Activated CD8-positive, alpha-beta T cell treated with anti-CD3 and anti-CD28 coated beads, Interleukin-2, amount 10 ng/mL, durations not matched to agents 7 days and 5 days (primary cell): ENCODE measurements at regions of chr1 and their contacts with region 1.

Region 1: DNA sequence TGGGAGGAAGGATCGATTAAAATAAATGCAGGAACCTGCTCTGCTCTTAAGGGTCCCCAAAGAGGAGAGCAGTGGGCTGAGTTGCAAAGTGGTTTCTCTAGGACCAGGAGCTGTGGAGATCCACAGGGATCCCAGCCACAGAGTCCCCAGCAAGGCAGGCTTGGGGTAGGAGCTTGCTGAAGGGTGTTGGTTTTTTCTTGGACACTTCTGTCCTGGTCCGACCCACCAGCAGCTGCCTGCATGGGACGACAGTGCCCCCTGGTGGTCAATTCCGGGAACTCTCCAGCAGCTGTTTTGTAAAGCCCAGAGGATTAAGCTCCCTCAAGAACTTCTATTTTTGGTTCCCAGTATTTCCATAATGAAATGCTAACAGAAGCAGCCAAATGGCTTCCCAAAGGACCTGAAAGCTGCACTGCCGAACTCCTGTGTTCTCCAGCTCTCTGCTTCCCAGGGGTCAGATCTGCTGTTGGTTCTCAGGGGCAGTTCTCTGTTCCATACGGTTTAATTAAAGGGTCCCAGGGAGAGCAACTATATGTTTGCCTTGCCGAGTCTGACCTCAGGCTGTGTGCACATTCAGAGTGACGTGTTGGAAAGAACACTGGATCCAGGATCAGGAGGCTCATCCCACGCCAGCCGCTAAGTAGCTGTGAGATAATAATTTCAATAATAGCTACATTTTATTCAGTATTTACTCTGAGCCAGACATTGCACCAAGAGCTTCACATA is 23.2 kb downstream of the NENF start:
- DNase-seq: peak; percentile 89
- ATAC-seq: peak; percentile 78
- H3K4me3 Mint-ChIP-seq: no peak overlapping the region
- H3K27ac Mint-ChIP-seq: no peak overlapping the region
- H3K4me1 Mint-ChIP-seq: peaks cover 15% of the 10 kb centered on the region
- H3K27me3 Mint-ChIP-seq: no peaks in the 10 kb centered on the region

Region 2: DNA sequence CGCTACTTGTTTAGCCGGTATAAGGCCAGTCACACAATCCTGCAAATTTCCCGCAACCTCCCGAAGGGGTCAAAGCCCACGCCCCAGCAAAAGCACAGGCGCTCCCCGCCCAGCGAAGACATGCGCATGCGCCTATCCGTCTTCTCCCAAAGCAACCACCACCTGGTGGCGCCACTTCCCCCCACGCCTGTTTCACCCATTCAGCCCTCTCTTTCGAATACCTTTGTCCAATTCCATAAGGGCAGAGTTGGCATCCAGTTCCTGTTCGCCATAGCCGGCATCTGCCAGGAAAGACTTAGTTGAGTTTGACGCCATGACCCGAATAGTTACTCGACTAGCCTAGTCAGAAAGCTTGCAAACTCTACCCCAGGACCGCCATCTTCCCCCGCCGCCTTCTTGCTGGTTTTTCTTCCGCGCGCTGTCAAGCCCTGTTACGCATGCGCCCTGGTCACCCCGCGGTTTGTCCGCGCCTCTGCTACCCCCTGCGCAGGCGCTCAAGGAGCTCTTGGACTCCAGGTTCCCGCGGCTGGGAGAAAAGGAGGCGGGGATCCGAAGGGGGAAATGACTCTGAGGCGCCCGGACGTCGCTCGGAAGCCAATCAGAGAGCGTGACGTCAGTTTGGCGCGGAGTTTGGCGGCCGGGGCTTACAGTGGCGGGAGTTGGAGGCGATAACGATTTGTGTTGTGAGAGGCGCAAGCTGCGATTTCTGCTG is 420.7 kb before region 1 on chr1 and contains the starts of genes DTL and INTS7:
- CTCF ChIA-PET with region 1: interaction called, 58 read pairs
- POLR2A ChIA-PET with region 1: interaction called, 3 read pairs
- DNase-seq: peak; percentile 100
- ATAC-seq: peak; percentile 87
- H3K4me3 Mint-ChIP-seq: peak within 1 kb of the TSS; percentile 98
- H3K27ac Mint-ChIP-seq: peak within 1 kb of the TSS; percentile 99
- H3K4me1 Mint-ChIP-seq: peaks cover 56% of the 10 kb centered on the region
- H3K27me3 Mint-ChIP-seq: no peaks in the 10 kb centered on the region
- total RNA-seq, gene DTL: 74.1 to 77.5 TPM
- total RNA-seq, gene INTS7: 31.8 to 32.1 TPM

Region 3: DNA sequence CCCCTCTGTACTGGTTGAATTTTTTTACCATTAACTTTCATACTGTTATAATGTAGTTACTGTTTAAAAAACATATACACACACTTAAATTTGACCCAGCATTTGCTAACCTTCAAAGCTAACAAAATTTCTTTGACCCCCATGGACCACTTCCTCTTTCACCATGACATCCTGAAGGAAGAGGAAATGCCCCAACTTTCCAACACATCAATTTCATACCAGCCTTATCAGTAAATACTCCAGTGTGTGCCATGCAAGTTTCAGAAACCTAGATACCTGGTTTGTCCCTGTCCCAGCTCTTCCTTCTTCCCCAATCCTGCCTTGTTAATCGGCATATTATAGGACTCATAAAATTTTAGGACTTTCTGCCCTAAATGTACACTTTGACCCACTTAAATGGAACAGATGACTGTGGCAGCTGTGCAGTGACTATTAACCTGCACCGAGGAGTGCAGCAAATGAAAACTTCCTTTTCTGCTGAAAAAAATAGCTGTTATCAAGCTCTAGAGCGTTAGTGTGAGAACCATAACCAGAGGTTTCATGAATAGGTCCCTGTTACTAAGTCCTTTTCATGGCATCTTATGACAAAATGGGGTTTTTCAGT is 366.3 kb before region 1 on chr1:
- CTCF ChIA-PET with region 1: interaction called, 15 read pairs
- POLR2A ChIA-PET with region 1: no interaction called
- DNase-seq: no peak
- ATAC-seq: no peak
- H3K4me3 Mint-ChIP-seq: no peak overlapping the region
- H3K27ac Mint-ChIP-seq: peak overlapping the region; percentile 12
- H3K4me1 Mint-ChIP-seq: peaks cover 30% of the 10 kb centered on the region
- H3K27me3 Mint-ChIP-seq: no peaks in the 10 kb centered on the region

Region 4: DNA sequence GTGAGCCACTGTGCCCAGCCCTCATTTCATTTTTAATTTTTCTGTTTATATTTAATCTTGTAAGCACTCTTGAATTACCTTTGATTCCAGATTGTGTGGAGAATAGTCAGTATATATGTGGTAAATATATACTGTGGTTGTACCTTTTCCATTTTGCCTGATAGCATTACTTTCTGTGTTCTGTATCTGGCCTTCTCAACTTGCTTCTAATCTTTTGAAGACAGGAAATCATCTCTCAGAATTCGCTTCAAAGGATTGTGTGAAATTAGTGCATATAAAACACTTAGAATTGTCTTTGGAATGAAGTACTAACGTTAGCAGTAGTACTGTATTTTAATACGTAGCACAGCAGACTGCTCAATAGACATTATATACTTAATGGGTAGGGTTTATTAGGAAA is 132.9 kb before region 1 on chr1:
- CTCF ChIA-PET with region 1: no interaction called
- POLR2A ChIA-PET with region 1: no interaction called
- DNase-seq: no peak
- ATAC-seq: no peak
- H3K4me3 Mint-ChIP-seq: no peak overlapping the region
- H3K27ac Mint-ChIP-seq: no peak overlapping the region
- H3K4me1 Mint-ChIP-seq: peaks cover 5% of the 10 kb centered on the region
- H3K27me3 Mint-ChIP-seq: no peaks in the 10 kb centered on the region

Region 5: GRCh38 chr1:212355230-212355969 is 100.6 kb before region 1 on chr1:
- CTCF ChIA-PET with region 1: interaction called, 14 read pairs
- POLR2A ChIA-PET with region 1: no interaction called
- DNase-seq: no peak
- ATAC-seq: no peak
- H3K4me3 Mint-ChIP-seq: no peak overlapping the region
- H3K27ac Mint-ChIP-seq: no peak overlapping the region
- H3K4me1 Mint-ChIP-seq: peaks cover 14% of the 10 kb centered on the region
- H3K27me3 Mint-ChIP-seq: no peaks in the 10 kb centered on the region

Region 6: DNA sequence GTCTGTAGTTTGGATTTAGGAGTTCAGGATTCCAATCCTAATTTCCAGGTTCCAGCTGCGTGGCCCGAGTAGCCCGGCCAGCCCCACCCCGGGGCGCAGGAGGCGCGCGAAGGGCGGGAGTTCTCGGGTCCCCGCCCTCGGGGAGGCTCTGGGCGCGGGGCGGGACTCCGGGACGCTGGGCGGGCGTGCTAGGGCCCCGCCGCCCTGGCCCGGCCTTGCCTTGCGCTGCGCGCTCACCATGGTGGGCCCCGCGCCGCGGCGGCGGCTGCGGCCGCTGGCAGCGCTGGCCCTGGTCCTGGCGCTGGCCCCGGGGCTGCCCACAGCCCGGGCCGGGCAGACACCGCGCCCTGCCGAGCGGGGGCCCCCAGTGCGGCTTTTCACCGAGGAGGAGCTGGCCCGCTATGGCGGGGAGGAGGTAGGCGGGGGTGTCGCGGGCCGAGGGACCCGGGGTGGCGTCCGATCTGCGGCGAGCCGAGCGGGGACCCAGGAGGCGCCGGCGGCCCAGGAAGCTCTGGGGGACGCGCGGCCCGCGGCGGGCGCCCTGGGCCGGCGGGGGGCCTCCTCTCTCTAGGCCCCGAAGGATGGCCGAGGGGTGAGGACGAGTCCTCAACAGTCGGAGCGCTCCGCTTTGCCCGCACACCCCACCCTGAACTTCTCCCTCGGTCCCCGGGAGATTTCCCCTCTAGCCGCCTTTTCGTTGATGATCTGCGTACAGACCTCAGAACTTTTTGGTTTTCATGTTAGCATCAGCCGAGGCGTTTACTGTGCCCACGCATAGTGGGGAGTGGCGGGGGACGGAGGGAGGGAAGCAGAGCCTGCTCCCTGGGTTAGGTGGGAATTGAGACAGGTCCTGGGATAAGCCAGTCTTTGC is 23.0 kb before region 1 on chr1 and contains the start of gene NENF:
- CTCF ChIA-PET with region 1: interaction called, 43 read pairs
- POLR2A ChIA-PET with region 1: no interaction called
- DNase-seq: peak; percentile 79
- ATAC-seq: peak; percentile 100
- H3K4me3 Mint-ChIP-seq: peak within 1 kb of the TSS; percentile 75
- H3K27ac Mint-ChIP-seq: peak within 1 kb of the TSS; percentile 30
- H3K4me1 Mint-ChIP-seq: peaks cover 28% of the 10 kb centered on the region
- H3K27me3 Mint-ChIP-seq: peaks cover 7% of the 10 kb centered on the region
- total RNA-seq, gene NENF: 29.2 to 29.3 TPM

Region 7: DNA sequence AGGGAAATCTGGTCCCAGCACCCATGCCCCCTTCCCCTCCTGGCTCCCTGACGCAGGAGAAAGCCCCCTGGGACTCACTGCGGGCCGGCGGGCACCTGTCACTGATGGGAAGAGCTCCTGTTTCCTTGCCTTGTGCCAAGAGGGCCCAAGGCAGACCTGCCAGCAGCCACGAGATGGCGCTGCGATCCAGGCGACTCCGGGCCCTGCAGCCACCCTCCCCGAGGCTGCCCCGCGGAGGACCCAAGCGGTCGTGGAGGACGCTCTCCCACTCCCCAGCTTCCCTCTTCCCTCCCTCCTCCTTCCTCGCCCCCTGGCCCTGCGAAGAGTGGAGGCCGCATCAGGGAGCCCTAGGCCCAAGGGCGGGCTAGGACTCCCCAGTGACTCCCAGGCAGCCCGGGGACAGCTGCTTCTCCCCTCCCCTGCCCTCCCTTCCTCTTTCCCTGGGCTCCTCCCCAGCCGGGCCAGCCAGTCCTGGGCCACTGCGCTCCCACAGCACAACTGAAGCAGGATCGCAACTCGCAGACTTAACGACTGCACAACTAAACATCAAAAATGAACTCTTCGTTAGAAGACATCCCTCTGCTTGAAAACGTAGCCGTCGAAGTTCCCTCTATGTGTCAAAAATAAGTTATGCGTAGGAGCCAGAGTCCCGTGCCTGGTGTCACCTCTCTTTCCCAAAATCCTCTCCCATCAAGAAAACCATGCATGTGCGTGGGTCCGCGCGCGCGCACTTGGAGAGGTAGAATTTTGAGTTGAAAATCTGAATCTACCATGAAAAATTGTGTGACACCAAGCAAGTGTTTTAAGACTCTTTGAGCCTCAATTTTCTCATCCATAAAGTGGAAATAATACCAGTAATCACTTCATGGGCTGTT is 209.5 kb after region 1 on chr1:
- CTCF ChIA-PET with region 1: interaction called, 46 read pairs
- POLR2A ChIA-PET with region 1: no interaction called
- DNase-seq: peak; percentile 85
- ATAC-seq: peak; percentile 99
- H3K4me3 Mint-ChIP-seq: peak overlapping the region; percentile 79
- H3K27ac Mint-ChIP-seq: peak overlapping the region; percentile 82
- H3K4me1 Mint-ChIP-seq: peaks cover 35% of the 10 kb centered on the region
- H3K27me3 Mint-ChIP-seq: peaks cover 15% of the 10 kb centered on the region